CD4-positive, alpha-beta T cell (primary cell): ENCODE measurements at regions of chr3 and their contacts with region 1.

Region 1: GRCh38 chr3:18623220-18623619 is 198.1 kb upstream of the SATB1 start:
- DNase-seq: no peak
- ATAC-seq: no peak
- H3K4me3 ChIP-seq: no peak overlapping the region
- H3K4me3 Mint-ChIP-seq: no peak overlapping the region
- H3K27ac ChIP-seq: no peak overlapping the region
- H3K27ac Mint-ChIP-seq: no peak overlapping the region
- H3K4me1 ChIP-seq: no peaks in the 10 kb centered on the region
- H3K4me1 Mint-ChIP-seq: peaks cover 20% of the 10 kb centered on the region
- H3K27me3 ChIP-seq: no peaks in the 10 kb centered on the region
- H3K27me3 Mint-ChIP-seq: no peaks in the 10 kb centered on the region
- CTCF ChIP-seq: no peak

Region 2: GRCh38 chr3:18580268-18580667 is 43.0 kb before region 1 on chr3:
- CTCF ChIA-PET with region 1: no interaction called
- POLR2A ChIA-PET with region 1: no interaction called
- intact Hi-C with region 1: loop called in 1 of 2 experiments (anchors 5 kb)
- DNase-seq: peak in 3 of 14 experiments; percentile 14 to 31 (median 29)
- ATAC-seq: peak; percentile 39
- H3K4me3 ChIP-seq: no peak overlapping the region
- H3K4me3 Mint-ChIP-seq: no peak overlapping the region
- H3K27ac ChIP-seq: no peak overlapping the region
- H3K27ac Mint-ChIP-seq: no peak overlapping the region
- H3K4me1 ChIP-seq: no peaks in the 10 kb centered on the region
- H3K4me1 Mint-ChIP-seq: peaks cover 19% of the 10 kb centered on the region
- H3K27me3 ChIP-seq: no peaks in the 10 kb centered on the region
- H3K27me3 Mint-ChIP-seq: no peaks in the 10 kb centered on the region
- CTCF ChIP-seq: no peak